Left ventricle myocardium inferior (tissue), 1 donor: ENCODE measurements at regions of chr17 and their contacts with region 1.

Region 1: GRCh38 chr17:17568749-17569195 is 22.7 kb downstream of the PEMT start:
- DNase-seq: peak; percentile 81
- H3K4me3 ChIP-seq: no peak overlapping the region
- H3K27ac ChIP-seq: peak overlapping the region; percentile 96
- H3K4me1 ChIP-seq: peaks cover 71% of the 10 kb centered on the region
- H3K27me3 ChIP-seq: no peaks in the 10 kb centered on the region
- CTCF ChIP-seq: peak; percentile 80

Region 2: DNA sequence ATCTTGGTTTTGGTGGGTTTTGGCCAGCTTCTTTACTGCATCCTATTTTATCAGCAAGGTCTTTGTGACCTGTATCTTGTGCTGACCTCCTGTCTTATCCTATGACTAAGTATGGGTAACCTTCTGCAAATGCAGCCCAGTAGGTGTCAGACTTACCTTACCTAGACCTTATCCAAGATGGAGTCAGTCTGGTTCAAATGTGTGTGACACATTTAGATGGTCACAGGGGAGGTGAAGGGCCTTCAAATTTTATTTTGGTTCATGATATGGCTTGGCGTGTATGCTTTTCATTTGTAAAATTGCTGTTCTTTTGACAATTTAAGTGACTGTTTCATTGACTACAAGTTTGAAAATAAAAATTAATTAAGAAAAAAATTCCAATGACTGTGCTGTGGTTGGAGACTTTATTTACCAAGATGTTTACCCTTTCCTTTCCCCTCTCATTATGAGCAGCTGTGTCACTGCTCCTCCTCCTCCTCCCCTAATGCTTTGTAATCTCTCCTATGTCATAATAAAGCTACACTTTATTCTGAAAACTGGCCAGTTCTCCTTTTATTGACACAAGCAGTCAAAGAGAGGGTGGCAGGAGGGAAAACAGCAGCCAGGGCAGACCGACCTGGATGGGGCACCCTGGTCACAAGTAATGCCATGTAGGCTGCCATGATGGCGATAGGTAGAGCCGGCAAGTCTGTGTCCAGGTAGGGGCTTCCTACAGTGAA is 646.2 kb before region 1 on chr17:
- intact Hi-C with region 1: no loop called
- DNase-seq: no peak
- H3K4me3 ChIP-seq: no peak overlapping the region
- H3K27ac ChIP-seq: no peak overlapping the region
- H3K4me1 ChIP-seq: no peaks in the 10 kb centered on the region
- H3K27me3 ChIP-seq: peaks cover 7% of the 10 kb centered on the region
- CTCF ChIP-seq: no peak

Region 3: GRCh38 chr17:17420561-17421269 is 148.1 kb before region 1 on chr17:
- intact Hi-C with region 1: loop called (anchors 5 kb)
- DNase-seq: peak; percentile 85
- H3K4me3 ChIP-seq: no peak overlapping the region
- H3K27ac ChIP-seq: peak overlapping the region; percentile 83
- H3K4me1 ChIP-seq: peaks cover 87% of the 10 kb centered on the region
- H3K27me3 ChIP-seq: no peaks in the 10 kb centered on the region
- CTCF ChIP-seq: no peak

Region 4: DNA sequence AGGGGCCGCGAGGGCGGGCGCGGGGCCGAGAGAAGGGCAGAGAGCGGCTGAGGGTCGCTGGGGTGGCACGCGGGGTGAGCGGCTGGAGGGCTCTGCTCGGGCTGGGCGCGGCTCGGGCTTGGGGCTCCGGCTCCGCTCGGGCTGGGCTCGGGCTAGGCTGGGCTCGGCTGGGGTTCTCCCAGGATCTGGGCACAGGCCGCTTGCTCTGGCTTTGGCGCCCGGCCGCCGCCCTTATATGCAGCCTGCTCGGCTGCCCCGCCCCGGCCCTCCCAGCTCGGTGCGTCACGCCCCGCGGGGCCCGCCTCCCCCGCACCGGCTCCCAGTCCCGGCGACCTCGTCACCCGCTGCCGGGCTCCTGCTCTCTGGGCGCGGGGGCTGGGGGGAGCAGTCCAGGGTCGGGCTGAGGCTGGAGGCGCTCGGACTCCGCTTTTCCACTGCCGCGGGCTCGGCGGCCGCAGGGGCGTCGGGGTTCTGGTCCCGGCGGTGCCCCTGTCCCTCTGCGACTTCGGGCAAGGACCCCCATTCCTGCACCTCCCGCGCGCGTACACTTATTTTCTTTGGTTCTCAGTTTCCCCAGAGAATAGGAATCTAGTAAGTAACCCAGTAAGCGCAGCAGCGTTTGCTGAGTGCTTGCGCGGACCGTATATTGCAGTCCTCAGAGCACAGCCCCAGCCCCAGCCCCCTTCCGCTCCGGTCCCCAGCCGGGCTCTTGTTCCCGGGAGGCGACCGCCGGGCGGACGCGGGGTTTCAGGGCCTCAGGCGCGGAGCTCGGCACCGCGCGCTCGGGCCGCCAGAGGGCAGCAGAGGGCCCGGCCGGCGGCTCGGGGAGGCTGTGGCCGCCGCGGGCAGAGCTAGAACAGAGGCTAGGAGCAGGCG is 72.3 kb before region 1 on chr17 and contains the start of gene RASD1:
- intact Hi-C with region 1: loop called (anchors 10 kb)
- DNase-seq: peak; percentile 93
- H3K4me3 ChIP-seq: peak within 1 kb of the TSS; percentile 86
- H3K27ac ChIP-seq: peak within 1 kb of the TSS; percentile 98
- H3K4me1 ChIP-seq: peaks cover 55% of the 10 kb centered on the region
- H3K27me3 ChIP-seq: no peaks in the 10 kb centered on the region
- CTCF ChIP-seq: peak; percentile 98
- total RNA-seq, gene RASD1: 25.4 TPM